ENCODE measurements at regions of chr11 and their contacts with region 1.

Region 1: DNA sequence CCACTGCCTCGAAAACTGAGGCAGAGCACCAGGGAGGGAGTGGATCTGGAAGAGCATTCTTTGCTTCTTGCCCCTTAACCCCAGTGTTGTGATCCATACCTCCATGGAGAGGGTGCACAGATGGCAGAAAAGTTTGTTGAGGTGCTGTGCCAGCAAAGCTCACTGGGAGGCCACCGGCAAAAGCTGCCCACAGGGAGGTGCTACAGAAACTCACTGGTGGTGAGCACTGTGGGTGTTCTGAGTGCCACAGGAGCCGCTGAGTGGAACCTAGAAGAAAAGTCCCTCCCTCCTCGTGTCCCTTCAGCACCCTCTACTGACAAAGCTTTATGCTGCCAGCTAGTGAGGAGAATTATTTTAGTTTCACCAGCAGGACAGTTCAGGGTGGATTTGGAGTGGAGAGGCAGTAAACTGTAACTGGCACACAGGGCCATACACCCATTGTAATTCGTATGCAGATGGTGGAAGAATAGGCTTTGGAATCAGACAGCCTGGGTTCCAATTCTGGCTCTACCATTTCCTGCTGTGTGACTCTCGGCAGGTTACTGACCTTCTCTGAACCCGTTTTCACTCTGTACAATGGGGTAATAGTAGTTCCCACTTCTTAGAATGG is 84.6 kb downstream of the SWAP70 start:
- DNase-seq: peak; percentile 88
- ATAC-seq: peak; percentile 77
- H3K4me3 ChIP-seq: peak overlapping the region in 3 of 5 experiments; percentile 4 to 30 (median 22)
- H3K4me3 Mint-ChIP-seq: peak overlapping the region; percentile 66
- H3K27ac ChIP-seq: peak overlapping the region; percentile 40 to 86
- H3K27ac Mint-ChIP-seq: peak overlapping the region; percentile 78
- H3K4me1 ChIP-seq: peaks cover 48 to 49% of the 10 kb centered on the region in 2 donors
- H3K4me1 Mint-ChIP-seq: peaks cover 60% of the 10 kb centered on the region
- H3K27me3 ChIP-seq: no peaks in the 10 kb centered on the region
- H3K27me3 Mint-ChIP-seq: no peaks in the 10 kb centered on the region
- CTCF ChIP-seq: peak; percentile 83

Region 2: GRCh38 chr11:9137293-9138132 is 611.0 kb before region 1 on chr11:
- CTCF ChIA-PET with region 1: no interaction called
- POLR2A ChIA-PET with region 1: no interaction called
- intact Hi-C with region 1: no loop called
- DNase-seq: peak; percentile 68
- ATAC-seq: peak; percentile 86
- H3K4me3 ChIP-seq: no peak overlapping the region
- H3K4me3 Mint-ChIP-seq: no peak overlapping the region
- H3K27ac ChIP-seq: no peak overlapping the region
- H3K27ac Mint-ChIP-seq: no peak overlapping the region
- H3K4me1 ChIP-seq: no peaks in the 10 kb centered on the region
- H3K4me1 Mint-ChIP-seq: peaks cover 3% of the 10 kb centered on the region
- H3K27me3 ChIP-seq: no peaks in the 10 kb centered on the region
- H3K27me3 Mint-ChIP-seq: no peaks in the 10 kb centered on the region
- CTCF ChIP-seq: peak; percentile 94

Region 3: GRCh38 chr11:9534791-9535781 is 213.4 kb before region 1 on chr11:
- CTCF ChIA-PET with region 1: interaction called, 129 read pairs
- POLR2A ChIA-PET with region 1: no interaction called
- intact Hi-C with region 1: loop called (anchors 1 kb)
- DNase-seq: peak; percentile 83
- ATAC-seq: peak; percentile 53
- H3K4me3 ChIP-seq: no peak overlapping the region
- H3K4me3 Mint-ChIP-seq: no peak overlapping the region
- H3K27ac ChIP-seq: no peak overlapping the region
- H3K27ac Mint-ChIP-seq: no peak overlapping the region
- H3K4me1 ChIP-seq: peaks cover 0 to 10% of the 10 kb centered on the region in 2 donors
- H3K4me1 Mint-ChIP-seq: peaks cover 2% of the 10 kb centered on the region
- H3K27me3 ChIP-seq: no peaks in the 10 kb centered on the region
- H3K27me3 Mint-ChIP-seq: no peaks in the 10 kb centered on the region
- CTCF ChIP-seq: peak; percentile 93

Region 4: GRCh38 chr11:9601037-9601875 is 147.2 kb before region 1 on chr11:
- CTCF ChIA-PET with region 1: interaction called, 55 read pairs
- POLR2A ChIA-PET with region 1: interaction called, 8 read pairs
- intact Hi-C with region 1: loop called (anchors 1 kb)
- DNase-seq: peak; percentile 89
- ATAC-seq: peak; percentile 80
- H3K4me3 ChIP-seq: peak overlapping the region; percentile 26 to 52 (median 44)
- H3K4me3 Mint-ChIP-seq: peak overlapping the region; percentile 79
- H3K27ac ChIP-seq: peak overlapping the region; percentile 82 to 85
- H3K27ac Mint-ChIP-seq: peak overlapping the region; percentile 87
- H3K4me1 ChIP-seq: peaks cover 36 to 45% of the 10 kb centered on the region in 2 donors
- H3K4me1 Mint-ChIP-seq: peaks cover 51% of the 10 kb centered on the region
- H3K27me3 ChIP-seq: no peaks in the 10 kb centered on the region
- H3K27me3 Mint-ChIP-seq: no peaks in the 10 kb centered on the region
- CTCF ChIP-seq: no peak

Region 5: DNA sequence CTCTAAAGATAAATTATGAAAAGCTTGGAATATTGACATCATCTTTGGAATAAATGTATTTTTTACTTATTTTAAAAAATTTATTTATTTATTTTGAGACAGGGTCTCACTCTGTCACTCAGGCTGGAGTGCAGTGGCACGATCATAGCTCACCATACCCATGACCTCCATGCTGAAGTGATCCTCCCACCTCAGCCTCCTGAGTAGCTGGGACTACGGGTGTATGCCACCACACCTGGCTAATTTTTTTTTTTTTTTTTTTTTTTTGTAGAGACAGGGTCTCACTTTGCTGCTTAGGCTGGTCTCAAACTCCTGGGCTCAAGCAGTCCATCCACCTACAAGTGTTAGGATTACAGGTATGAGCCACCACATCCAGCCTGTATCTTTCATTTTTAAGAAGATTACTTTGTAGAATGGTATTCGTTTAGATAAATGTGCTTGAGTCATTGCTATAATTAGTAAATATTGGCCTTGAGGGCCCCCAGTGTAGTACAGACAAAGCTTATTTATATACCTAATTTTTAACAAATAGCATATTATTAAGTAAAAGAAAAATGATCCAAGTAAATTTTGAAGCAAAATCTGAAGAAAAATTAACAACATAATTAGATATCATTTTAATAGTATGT is 76.1 kb before region 1 on chr11:
- CTCF ChIA-PET with region 1: interaction called, 94 read pairs
- POLR2A ChIA-PET with region 1: no interaction called
- intact Hi-C with region 1: no loop called
- DNase-seq: no peak
- ATAC-seq: no peak
- H3K4me3 ChIP-seq: peak overlapping the region in 1 of 5 experiments; percentile 33
- H3K4me3 Mint-ChIP-seq: peak overlapping the region; percentile 81
- H3K27ac ChIP-seq: peak overlapping the region; percentile 44 to 68
- H3K27ac Mint-ChIP-seq: no peak overlapping the region
- H3K4me1 ChIP-seq: peaks cover 72 to 80% of the 10 kb centered on the region in 2 donors
- H3K4me1 Mint-ChIP-seq: peaks cover 61% of the 10 kb centered on the region
- H3K27me3 ChIP-seq: no peaks in the 10 kb centered on the region
- H3K27me3 Mint-ChIP-seq: no peaks in the 10 kb centered on the region
- CTCF ChIP-seq: no peak

Region 6: DNA sequence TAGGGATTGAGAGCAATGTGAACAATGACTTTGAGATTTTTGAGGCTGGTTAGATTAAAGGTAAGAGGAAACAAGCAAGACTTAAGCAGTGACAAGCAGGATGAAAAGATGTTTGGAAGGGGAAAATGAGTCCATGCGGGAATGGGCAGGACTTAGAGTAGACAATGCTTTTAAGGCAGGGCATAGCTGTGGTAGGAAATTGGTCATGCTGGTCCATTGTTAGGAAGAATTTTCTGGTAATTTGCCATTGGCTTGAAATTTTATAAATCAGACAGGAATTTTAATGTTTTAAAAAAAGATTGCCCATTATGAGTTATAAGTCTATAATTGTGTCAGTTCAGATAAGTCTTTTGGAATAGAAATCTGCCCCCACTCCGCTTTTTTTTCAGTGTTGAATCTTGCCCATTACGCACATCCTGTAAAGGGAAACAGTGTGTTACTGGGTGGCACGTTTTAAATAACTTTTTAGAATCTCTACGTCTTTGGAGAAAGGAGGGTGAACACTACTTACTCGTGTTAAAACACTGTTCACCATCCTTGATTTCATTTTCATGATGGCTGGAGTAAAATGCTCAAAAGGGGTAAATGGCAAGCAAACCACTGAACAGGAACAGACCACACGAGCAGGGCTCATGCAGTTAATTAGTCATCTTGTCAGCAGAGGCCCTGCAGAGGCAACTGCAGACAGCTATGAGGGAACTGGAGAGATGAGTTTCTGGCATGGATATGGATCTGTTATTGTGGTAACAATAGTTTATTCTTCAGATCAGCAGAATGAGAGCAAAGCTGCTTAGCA is 59.6 kb before region 1 on chr11:
- CTCF ChIA-PET with region 1: interaction called, 94 read pairs
- POLR2A ChIA-PET with region 1: interaction called, 3 read pairs
- intact Hi-C with region 1: no loop called
- DNase-seq: peak; percentile 78
- ATAC-seq: peak; percentile 74
- H3K4me3 ChIP-seq: peak overlapping the region in 4 of 5 experiments; percentile 7 to 50 (median 26)
- H3K4me3 Mint-ChIP-seq: no peak overlapping the region
- H3K27ac ChIP-seq: peak overlapping the region; percentile 91 to 96
- H3K27ac Mint-ChIP-seq: no peak overlapping the region
- H3K4me1 ChIP-seq: peaks cover 85 to 88% of the 10 kb centered on the region in 2 donors
- H3K4me1 Mint-ChIP-seq: peaks cover 60% of the 10 kb centered on the region
- H3K27me3 ChIP-seq: no peaks in the 10 kb centered on the region
- H3K27me3 Mint-ChIP-seq: no peaks in the 10 kb centered on the region
- CTCF ChIP-seq: no peak

Region 7: GRCh38 chr11:9726321-9727022 is 22.0 kb before region 1 on chr11:
- CTCF ChIA-PET with region 1: interaction called, 111 read pairs
- POLR2A ChIA-PET with region 1: interaction called, 6 read pairs
- intact Hi-C with region 1: no loop called
- DNase-seq: no peak
- ATAC-seq: peak; percentile 34
- H3K4me3 ChIP-seq: no peak overlapping the region
- H3K4me3 Mint-ChIP-seq: peak overlapping the region; percentile 65
- H3K27ac ChIP-seq: peak overlapping the region; percentile 14 to 86
- H3K27ac Mint-ChIP-seq: peak overlapping the region; percentile 87
- H3K4me1 ChIP-seq: peaks cover 68 to 76% of the 10 kb centered on the region in 2 donors
- H3K4me1 Mint-ChIP-seq: peaks cover 74% of the 10 kb centered on the region
- H3K27me3 ChIP-seq: no peaks in the 10 kb centered on the region
- H3K27me3 Mint-ChIP-seq: no peaks in the 10 kb centered on the region
- CTCF ChIP-seq: no peak

Measured in B cell (primary cell).